Calu3 (cell line): ENCODE measurements at regions of chr2 and their contacts with region 1.

Region 1: GRCh38 chr2:18987592-18988073 is 370.8 kb downstream of the OSR1 start:
- DNase-seq: peak; percentile 64
- H3K4me3 Mint-ChIP-seq: no peak overlapping the region
- H3K27ac Mint-ChIP-seq: no peak overlapping the region
- H3K4me1 Mint-ChIP-seq: peaks cover 14% of the 10 kb centered on the region
- H3K27me3 Mint-ChIP-seq: no peaks in the 10 kb centered on the region
- CTCF ChIP-seq: no peak

Region 2: DNA sequence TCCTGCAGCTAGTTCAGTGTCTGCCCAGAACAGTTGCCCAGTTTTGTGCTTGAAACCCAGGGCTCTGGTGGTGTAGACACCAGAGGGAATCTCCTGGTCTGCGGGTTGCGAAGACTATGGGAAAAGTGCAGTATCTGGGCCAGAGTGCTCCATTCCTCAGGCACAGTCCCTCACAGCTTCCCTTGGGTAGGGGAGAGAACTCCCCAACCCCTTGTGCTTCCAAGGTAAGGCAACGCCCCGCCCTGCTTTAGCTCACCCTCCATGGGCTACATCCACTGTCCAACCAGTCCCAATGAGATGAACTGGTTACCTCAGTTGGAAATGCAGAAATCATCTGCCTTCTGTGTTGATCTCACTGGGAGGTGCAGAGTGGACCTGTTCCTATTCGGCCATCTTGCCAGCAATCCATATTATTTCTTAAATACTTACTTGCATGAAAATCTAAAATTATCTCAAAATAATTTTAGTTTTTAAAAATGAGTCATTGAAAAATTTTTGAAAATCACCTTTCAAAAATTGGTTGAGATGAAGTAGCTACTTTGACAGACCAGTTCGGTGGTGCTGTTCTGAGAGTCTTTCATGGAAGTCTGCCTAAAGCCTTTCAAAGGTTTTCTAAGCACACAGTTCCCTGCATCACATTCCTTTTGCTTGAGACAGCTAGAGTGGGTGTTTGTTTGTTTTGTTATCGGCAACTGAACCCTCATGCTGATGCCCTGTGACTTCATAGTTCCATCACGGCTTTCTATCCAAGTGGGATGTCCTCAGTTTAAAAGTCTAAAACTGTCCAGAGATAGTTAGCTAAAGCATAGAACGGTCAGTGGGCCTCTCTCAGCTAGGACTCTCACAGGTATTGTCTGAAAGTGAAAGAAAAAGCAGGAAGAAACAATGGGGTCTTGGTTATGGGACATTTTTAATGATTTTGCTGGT is 33.2 kb after region 1 on chr2:
- CTCF ChIA-PET with region 1: no interaction called
- intact Hi-C with region 1: loop called (anchors 2 kb)
- DNase-seq: no peak
- H3K4me3 Mint-ChIP-seq: no peak overlapping the region
- H3K27ac Mint-ChIP-seq: no peak overlapping the region
- H3K4me1 Mint-ChIP-seq: peaks cover 10% of the 10 kb centered on the region
- H3K27me3 Mint-ChIP-seq: no peaks in the 10 kb centered on the region
- CTCF ChIP-seq: no peak

Region 3: GRCh38 chr2:19098467-19099159 is 111.0 kb after region 1 on chr2:
- CTCF ChIA-PET with region 1: no interaction called
- intact Hi-C with region 1: no loop called
- DNase-seq: no peak
- H3K4me3 Mint-ChIP-seq: no peak overlapping the region
- H3K27ac Mint-ChIP-seq: no peak overlapping the region
- H3K4me1 Mint-ChIP-seq: no peaks in the 10 kb centered on the region
- H3K27me3 Mint-ChIP-seq: no peaks in the 10 kb centered on the region
- CTCF ChIP-seq: no peak